ENCODE measurements at regions of chr5 and their contacts with region 1.

Region 1: DNA sequence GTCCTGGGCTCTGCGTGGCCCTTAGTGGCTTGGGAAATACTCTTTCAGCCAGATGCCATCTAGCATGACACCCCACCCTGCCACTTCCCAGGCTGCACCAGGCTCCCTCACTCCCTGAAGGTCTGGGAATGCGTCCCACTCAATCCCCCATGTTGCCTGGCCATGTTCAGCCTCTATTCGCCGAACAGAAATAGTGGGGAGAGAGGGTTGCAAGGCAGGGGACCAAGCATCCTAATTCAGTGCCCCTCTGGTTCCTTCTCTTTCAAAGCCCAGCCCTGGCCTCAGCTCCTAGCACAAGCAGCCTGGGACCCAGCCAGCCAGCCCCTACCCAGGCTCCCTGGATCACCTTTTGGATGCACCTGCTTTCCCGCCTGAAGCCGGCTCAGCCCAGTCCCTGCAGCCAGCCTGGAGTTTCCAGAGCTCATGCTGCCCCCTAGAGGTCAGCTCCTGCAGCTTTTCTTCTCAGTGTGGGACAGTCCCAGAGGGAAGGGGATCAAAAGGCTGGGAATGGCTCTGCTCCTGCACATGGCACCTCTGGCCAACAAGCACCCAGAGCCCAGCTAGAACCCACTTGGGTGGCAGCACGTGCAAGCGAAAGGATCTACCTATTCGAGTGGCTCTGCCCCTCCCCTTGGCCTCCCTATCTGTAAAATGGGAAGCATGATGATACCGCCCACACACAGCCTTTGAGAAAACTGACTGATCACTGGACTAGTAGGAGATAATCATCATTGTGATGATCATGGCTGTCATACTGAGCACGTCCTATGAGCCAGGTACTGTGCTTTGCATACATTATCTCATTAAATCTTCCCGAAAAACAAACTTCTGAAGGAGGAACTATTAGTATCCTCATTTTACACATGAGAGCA is 48.7 kb upstream of the C5orf58 start:
- DNase-seq: peak; percentile 74
- H3K4me3 ChIP-seq: no peak overlapping the region
- H3K27ac ChIP-seq: peak overlapping the region in 1 of 2 experiments; percentile 85; a peak in 1 of 4 replicates
- H3K4me1 ChIP-seq: peaks cover 0 to 24% of the 10 kb centered on the region in 2 experiments; a peak in 2 of 4 replicates
- H3K27me3 ChIP-seq: no peaks in the 10 kb centered on the region
- CTCF ChIP-seq: peak; percentile 87
- EP300 ChIP-seq: no peak
- RAD21 ChIP-seq: peak; percentile 90

Region 2: GRCh38 chr5:169701910-169702451 is 482.1 kb before region 1 on chr5:
- CTCF ChIA-PET with region 1: interaction called, 11 read pairs
- POLR2A ChIA-PET with region 1: no interaction called
- DNase-seq: peak; percentile 37
- H3K4me3 ChIP-seq: no peak overlapping the region; a peak in 1 of 4 replicates
- H3K27ac ChIP-seq: peak overlapping the region in 1 of 2 experiments; percentile 6; a peak in 1 of 4 replicates
- H3K4me1 ChIP-seq: peaks cover 3 to 31% of the 10 kb centered on the region in 2 experiments; a peak in 3 of 4 replicates
- H3K27me3 ChIP-seq: no peaks in the 10 kb centered on the region
- CTCF ChIP-seq: peak; percentile 74
- EP300 ChIP-seq: no peak
- RAD21 ChIP-seq: peak; percentile 87

Region 3: GRCh38 chr5:170111088-170111785 is 72.8 kb before region 1 on chr5:
- CTCF ChIA-PET with region 1: interaction called, 201 read pairs
- POLR2A ChIA-PET with region 1: no interaction called
- DNase-seq: no peak
- H3K4me3 ChIP-seq: no peak overlapping the region
- H3K27ac ChIP-seq: no peak overlapping the region
- H3K4me1 ChIP-seq: no peaks in the 10 kb centered on the region; a peak in 1 of 4 replicates
- H3K27me3 ChIP-seq: no peaks in the 10 kb centered on the region; the same call in 1 of the 2 replicates
- CTCF ChIP-seq: no peak
- EP300 ChIP-seq: no peak
- RAD21 ChIP-seq: no peak

Region 4: DNA sequence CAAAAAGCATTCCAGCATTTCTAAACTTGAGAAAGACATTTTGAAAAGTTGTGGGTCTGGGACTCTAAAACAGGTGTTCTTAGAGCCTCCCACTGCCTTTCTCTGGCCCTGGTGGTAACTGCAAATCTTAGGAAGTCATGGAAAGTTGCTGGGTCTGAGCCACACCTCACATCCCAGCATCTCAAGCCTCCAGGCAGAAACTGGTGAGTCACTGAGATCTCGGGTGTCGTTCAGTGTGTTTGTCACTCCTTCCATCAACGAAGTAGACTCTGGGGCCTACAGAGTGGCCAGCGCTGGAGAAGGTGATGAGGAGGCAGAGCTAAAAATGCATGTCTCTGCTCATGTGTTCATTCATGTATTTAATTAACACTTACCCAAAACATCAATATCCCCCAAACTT is 10.8 kb before region 1 on chr5:
- CTCF ChIA-PET with region 1: interaction called, 52 read pairs
- POLR2A ChIA-PET with region 1: no interaction called
- DNase-seq: no peak
- H3K4me3 ChIP-seq: no peak overlapping the region
- H3K27ac ChIP-seq: no peak overlapping the region
- H3K4me1 ChIP-seq: peaks cover 0 to 18% of the 10 kb centered on the region in 2 experiments; a peak in 1 of 4 replicates
- H3K27me3 ChIP-seq: no peaks in the 10 kb centered on the region
- CTCF ChIP-seq: no peak
- EP300 ChIP-seq: no peak
- RAD21 ChIP-seq: no peak

Region 5: DNA sequence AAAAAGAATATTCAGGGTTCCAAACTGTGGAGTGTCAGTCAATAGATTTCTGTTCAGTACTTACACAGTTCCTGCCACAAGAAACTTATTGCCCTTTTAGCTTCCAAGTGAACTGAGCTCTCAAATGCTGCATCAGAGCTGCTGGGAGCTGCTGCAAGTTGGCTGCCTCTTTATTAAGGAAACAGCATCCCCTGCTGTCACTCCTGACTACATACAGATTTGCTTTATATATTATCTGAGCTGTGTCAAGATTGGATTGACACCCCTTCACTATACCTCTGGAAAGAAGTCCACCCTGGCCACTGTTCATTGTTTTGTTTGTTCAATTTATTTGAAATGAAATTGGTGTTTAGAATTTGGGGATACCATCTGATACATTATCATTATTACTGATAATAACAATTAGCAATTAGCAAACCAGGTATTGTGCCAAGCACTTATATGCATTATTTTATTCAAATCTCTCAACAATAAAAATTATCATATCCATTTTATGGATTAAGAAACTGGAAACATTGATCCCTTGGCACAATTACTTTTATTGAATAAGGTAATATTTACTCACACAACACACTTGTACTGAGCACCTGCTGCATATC is 32.3 kb after region 1 on chr5:
- CTCF ChIA-PET with region 1: interaction called, 46 read pairs
- POLR2A ChIA-PET with region 1: no interaction called
- DNase-seq: peak; percentile 57
- H3K4me3 ChIP-seq: no peak overlapping the region; a peak in 1 of 4 replicates
- H3K27ac ChIP-seq: no peak overlapping the region
- H3K4me1 ChIP-seq: peaks cover 0 to 15% of the 10 kb centered on the region in 2 experiments; a peak in 1 of 4 replicates
- H3K27me3 ChIP-seq: no peaks in the 10 kb centered on the region
- CTCF ChIP-seq: peak; percentile 75
- EP300 ChIP-seq: no peak
- RAD21 ChIP-seq: peak; percentile 98

Region 6: GRCh38 chr5:170302653-170303501 is 118.8 kb after region 1 on chr5:
- CTCF ChIA-PET with region 1: no interaction called
- POLR2A ChIA-PET with region 1: no interaction called
- DNase-seq: no peak
- H3K4me3 ChIP-seq: no peak overlapping the region
- H3K27ac ChIP-seq: no peak overlapping the region
- H3K4me1 ChIP-seq: no peaks in the 10 kb centered on the region; a peak in 1 of 4 replicates
- H3K27me3 ChIP-seq: no peaks in the 10 kb centered on the region; the same call in 1 of the 2 replicates
- CTCF ChIP-seq: no peak
- EP300 ChIP-seq: no peak
- RAD21 ChIP-seq: no peak

Measured in SK-N-SH (cell line).